GM12878 (cell line): ENCODE measurements at regions of chr1 and their contacts with region 1.

Region 1: DNA sequence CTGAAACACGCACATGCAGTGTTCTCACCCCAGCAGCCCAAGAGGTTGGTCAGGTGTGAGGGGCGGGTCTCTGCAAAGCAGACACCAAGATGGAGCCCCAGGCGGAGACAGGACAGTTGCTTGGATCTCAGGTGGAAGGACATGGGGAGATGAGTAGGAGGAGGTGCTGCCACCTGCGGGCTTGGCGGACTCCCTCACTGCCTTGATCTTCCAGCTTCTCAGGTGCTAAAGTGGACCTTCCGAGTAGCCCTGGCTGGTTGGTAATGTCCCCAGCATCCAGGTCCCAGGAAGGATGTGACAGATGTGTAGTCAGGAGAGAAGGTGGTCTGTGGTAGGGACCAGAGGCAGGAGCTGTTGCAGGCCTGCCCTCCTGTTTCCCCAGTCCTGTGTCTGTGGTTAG is 114.1 kb downstream of the AJAP1 start:
- DNase-seq: no peak
- ATAC-seq: no peak
- H3K4me3 ChIP-seq: no peak overlapping the region
- H3K27ac ChIP-seq: no peak overlapping the region
- H3K4me1 ChIP-seq: no peaks in the 10 kb centered on the region
- H3K27me3 ChIP-seq: no peaks in the 10 kb centered on the region
- CTCF ChIP-seq: no peak
- EP300 ChIP-seq: no peak
- POLR2A ChIP-seq: no peak
- RAD21 ChIP-seq: no peak

Region 2: DNA sequence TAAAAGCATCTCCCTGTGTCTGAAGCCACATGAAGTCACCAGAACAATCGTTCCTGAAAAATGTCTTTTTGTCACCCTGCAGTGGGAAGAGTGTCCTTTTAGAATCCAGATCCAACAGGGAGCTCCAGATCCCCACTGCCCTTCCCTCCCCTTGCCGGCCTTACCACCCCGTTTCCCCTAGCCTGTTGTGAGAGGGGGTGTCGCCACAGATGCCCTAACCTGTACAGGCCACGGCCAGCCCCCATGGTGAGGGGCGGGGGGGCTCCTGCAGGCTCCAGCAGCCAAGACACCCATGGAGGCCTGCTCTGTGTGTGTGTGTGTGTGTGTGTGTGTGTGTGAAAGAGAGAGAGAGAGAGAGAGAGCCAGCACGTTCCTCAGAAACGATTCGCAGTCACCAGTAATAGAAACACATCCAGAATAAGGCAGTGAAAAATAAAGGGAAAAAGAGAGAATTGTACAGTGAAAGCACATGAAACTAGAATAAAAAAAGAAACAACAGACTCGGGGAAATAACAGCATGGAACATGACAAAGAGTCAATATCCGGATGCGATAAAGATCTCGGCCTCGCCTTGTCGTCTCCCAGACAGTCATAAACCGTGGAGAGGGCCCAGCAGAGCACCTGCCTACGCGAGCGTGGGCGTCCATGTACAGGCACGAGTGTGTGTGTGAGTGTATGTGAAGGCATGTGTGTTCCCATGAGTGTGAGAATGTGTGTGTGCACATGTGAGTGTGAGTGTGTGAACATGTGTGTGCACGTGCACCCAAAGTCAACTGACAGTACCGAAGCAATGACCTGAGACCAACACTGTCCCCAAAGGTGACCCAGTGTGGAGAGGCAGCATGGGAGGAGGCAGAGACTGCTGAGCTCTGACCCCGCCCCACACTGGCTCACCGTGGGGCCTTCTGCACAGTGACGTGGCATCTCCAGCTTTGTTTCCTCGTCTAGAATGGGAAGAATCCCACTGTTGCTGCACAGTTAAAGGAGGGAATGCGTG is 919.8 kb after region 1 on chr1:
- CTCF ChIA-PET with region 1: no interaction called
- POLR2A ChIA-PET with region 1: no interaction called
- RAD21 ChIA-PET with region 1: no interaction called
- SMC1A ChIA-PET with region 1: no interaction called
- in situ Hi-C with region 1: loop called (anchors 10 kb)
- intact Hi-C with region 1: no loop called
- DNase-seq: no peak
- ATAC-seq: no peak
- H3K4me3 ChIP-seq: no peak overlapping the region
- H3K27ac ChIP-seq: no peak overlapping the region
- H3K4me1 ChIP-seq: no peaks in the 10 kb centered on the region
- H3K27me3 ChIP-seq: no peaks in the 10 kb centered on the region
- CTCF ChIP-seq: no peak
- EP300 ChIP-seq: no peak
- POLR2A ChIP-seq: no peak
- RAD21 ChIP-seq: no peak